ENCODE measurements at regions of chr21 and their contacts with region 1.

Region 1: DNA sequence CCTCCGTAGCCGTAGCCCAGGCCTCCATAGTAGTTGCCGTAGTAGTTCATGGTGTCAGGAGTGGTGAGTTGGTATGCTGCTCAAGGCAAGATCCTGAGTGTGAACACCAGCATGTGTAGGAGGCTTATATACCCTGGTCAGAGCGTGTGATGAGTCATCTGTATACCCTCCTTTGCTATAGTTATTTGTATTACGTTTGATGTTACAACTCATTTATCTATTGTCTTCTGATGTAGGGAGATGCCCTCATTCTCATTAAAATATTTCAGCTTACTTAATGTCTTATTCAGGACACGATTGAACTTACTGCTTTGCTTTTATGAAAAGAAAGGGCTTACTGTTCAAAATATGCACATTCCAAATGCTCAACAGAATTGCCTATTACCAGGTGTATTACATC is at the start of gene KRTAP19-5:
- DNase-seq: no peak
- ATAC-seq: no peak
- H3K4me3 ChIP-seq: no peak within 1 kb of the TSS
- H3K27ac ChIP-seq: no peak within 1 kb of the TSS
- H3K4me1 ChIP-seq: no peaks in the 10 kb centered on the region
- H3K27me3 ChIP-seq: no peaks in the 10 kb centered on the region
- CTCF ChIP-seq: no peak
- total RNA-seq, gene KRTAP19-5: not detected

Region 2: GRCh38 chr21:30563072-30563471 is 61.0 kb after region 1 on chr21:
- intact Hi-C with region 1: loop called in 1 of 10 experiments (anchors 10 kb)
- DNase-seq: no peak
- ATAC-seq: no peak
- H3K4me3 ChIP-seq: no peak overlapping the region
- H3K27ac ChIP-seq: no peak overlapping the region
- H3K4me1 ChIP-seq: no peaks in the 10 kb centered on the region
- H3K27me3 ChIP-seq: no peaks in the 10 kb centered on the region
- CTCF ChIP-seq: no peak

Region 3: DNA sequence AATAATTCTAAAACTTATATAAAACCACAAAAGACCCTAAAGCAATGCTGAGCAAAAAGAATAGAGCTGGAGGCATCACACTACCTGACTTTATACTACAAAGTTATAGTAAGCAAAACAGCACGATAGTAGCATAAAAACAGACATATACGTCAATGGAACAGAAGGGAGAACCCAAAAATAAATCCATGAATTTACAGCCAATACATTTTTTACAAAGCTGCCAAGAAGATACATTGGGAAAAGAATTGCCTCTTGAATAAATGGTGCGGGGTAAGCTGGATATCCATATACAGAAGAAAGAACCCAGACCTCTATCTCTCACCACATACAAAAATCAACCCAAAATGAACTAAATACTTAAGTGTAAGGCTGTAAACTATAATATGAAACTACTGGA is 430.6 kb after region 1 on chr21:
- intact Hi-C with region 1: no loop called
- DNase-seq: no peak
- ATAC-seq: no peak
- H3K4me3 ChIP-seq: no peak overlapping the region
- H3K27ac ChIP-seq: no peak overlapping the region
- H3K4me1 ChIP-seq: no peaks in the 10 kb centered on the region
- H3K27me3 ChIP-seq: no peaks in the 10 kb centered on the region
- CTCF ChIP-seq: no peak